ENCODE measurements at regions of chr4 and their contacts with region 1.

Region 1: DNA sequence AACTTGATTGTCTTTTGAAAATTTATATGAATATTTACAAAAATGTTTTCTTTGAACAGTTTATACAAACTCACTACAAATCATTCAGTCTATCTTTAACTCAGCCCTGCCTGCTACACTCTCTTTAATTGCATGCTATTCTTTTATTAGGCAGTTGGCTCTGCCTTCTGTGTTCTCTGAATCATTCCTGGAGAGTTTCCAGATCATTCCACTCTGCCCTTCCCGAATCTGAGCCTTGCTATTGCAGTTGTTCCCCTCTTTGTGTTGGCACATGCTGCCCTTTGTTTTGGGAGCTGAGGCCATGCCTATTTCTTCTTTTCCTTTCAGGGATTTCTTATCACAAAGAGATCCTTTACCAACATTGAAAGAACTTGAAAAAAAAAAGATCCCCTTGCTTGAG is 8.7 kb upstream of the TECRL start:
- DNase-seq: no peak
- ATAC-seq: peak; percentile 94 to 95
- H3K4me3 ChIP-seq: no peak overlapping the region
- H3K27ac ChIP-seq: peak overlapping the region; percentile 58
- H3K4me1 ChIP-seq: no peaks in the 10 kb centered on the region
- H3K27me3 ChIP-seq: no peaks in the 10 kb centered on the region

Region 2: GRCh38 chr4:64095398-64095797 is 322.6 kb before region 1 on chr4:
- intact Hi-C with region 1: no loop called
- DNase-seq: no peak
- ATAC-seq: no peak
- H3K4me3 ChIP-seq: no peak overlapping the region
- H3K27ac ChIP-seq: no peak overlapping the region
- H3K4me1 ChIP-seq: no peaks in the 10 kb centered on the region
- H3K27me3 ChIP-seq: no peaks in the 10 kb centered on the region

Region 3: DNA sequence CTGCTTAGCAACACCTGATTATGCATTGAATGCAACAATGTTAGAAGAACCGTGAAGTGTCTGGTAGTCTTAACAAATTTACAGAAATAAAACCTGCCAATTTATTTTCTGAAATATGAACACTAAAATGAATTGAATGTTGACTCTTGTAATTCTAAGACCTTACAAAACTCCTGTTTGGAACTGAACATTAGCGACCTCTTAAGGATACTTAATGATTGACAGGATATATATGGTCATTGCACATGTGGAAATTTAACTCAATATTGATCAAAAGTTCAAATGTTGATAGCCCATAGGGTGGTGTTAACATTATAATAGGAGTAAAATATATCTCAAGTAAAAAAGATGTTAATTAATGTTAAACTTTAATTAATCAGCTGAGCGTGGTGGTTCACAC is 87.8 kb before region 1 on chr4:
- intact Hi-C with region 1: no loop called
- DNase-seq: no peak
- ATAC-seq: no peak
- H3K4me3 ChIP-seq: no peak overlapping the region
- H3K27ac ChIP-seq: no peak overlapping the region
- H3K4me1 ChIP-seq: no peaks in the 10 kb centered on the region
- H3K27me3 ChIP-seq: no peaks in the 10 kb centered on the region

Region 4: DNA sequence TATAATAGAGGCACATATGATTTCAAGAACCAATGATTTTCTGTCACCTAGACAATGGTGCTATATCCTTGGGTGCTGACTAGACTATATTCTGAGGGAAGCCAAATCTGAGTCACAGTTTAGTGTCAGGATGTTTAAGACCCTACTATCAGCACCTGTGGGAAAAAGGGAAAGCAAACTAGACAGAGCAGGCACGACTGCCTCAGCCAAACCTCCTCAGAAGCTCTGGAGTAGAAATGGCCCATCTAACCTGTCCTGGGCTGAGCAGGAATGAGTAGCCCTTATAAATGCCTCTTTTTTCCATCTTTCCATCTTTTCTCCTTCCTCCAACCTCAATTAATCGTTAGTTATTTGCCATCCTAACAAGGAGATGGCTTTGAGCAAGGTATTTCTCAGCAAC is 71.7 kb after region 1 on chr4:
- intact Hi-C with region 1: loop called in 1 of 4 experiments (anchors 10 kb)
- DNase-seq: peak in 1 of 3 donors; percentile 2
- ATAC-seq: no peak
- H3K4me3 ChIP-seq: no peak overlapping the region
- H3K27ac ChIP-seq: no peak overlapping the region
- H3K4me1 ChIP-seq: no peaks in the 10 kb centered on the region
- H3K27me3 ChIP-seq: no peaks in the 10 kb centered on the region

Region 5: DNA sequence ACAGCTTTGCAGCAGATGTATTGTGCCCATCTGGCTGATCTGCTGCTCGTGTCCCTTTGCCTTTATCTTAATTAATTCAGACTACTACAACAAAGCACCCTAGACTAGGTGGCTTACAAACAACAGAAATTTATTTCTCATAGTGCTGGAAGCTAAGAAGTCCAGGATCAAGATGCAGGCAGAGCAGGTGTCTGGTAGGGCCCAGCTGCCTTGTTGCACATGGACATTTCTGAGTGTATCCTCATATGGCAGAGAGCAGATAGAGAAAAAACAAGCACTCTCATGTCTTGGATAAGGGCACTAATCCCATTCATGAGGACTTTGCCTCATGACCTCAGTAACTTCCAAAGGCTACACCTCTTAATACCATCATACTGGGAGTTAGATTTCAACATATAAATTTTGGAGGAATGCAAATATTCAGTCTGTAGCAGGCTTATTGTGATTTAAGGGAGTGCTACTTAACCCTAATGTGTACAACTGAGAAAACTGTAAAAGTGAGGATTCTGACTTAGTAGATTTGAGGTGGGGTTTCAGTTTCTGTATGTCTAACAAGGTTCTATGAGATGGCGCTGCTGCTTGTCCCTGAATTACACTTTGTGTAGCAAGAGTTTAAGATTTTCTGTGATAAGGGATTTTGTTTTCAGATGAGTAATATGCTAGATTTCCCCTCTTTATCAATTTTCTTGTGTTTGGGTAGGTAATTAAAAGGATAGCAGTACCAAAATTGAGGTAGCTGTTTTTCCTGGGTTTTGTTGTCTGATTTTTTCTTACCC is 464.5 kb after region 1 on chr4:
- intact Hi-C with region 1: no loop called
- DNase-seq: no peak
- ATAC-seq: no peak
- H3K4me3 ChIP-seq: no peak overlapping the region
- H3K27ac ChIP-seq: no peak overlapping the region
- H3K4me1 ChIP-seq: no peaks in the 10 kb centered on the region
- H3K27me3 ChIP-seq: no peaks in the 10 kb centered on the region